Heart left ventricle (tissue), 16 donors: ENCODE measurements at regions of chr1 and their contacts with region 1.

Region 1: GRCh38 chr1:164240083-164240482 is 318.9 kb upstream of the PBX1 start:
- DNase-seq: no peak
- ATAC-seq: no peak
- H3K4me3 ChIP-seq: no peak overlapping the region
- H3K27ac ChIP-seq: no peak overlapping the region
- H3K4me1 ChIP-seq: no peaks in the 10 kb centered on the region
- H3K27me3 ChIP-seq: no peaks in the 10 kb centered on the region
- CTCF ChIP-seq: peak in 10 of 12 donors; percentile 7 to 40 (median 22)
- POLR2A ChIP-seq: no peak

Region 2: GRCh38 chr1:164794310-164794709 is 554.2 kb after region 1 on chr1:
- intact Hi-C with region 1: loop called in 3 of 10 experiments (anchors 5 to 10 kb)
- DNase-seq: no peak
- ATAC-seq: peak; percentile 53 to 92 (median 78)
- H3K4me3 ChIP-seq: no peak overlapping the region
- H3K27ac ChIP-seq: peak overlapping the region in 3 of 12 donors; percentile 22 to 81 (median 42)
- H3K4me1 ChIP-seq: peaks cover 0 to 38% (median 4%) of the 10 kb centered on the region in 12 donors
- H3K27me3 ChIP-seq: no peaks in the 10 kb centered on the region
- CTCF ChIP-seq: no peak
- POLR2A ChIP-seq: no peak